WTC11 (cell line): ENCODE measurements at regions of chr1 and their contacts with region 1.

Region 1: GRCh38 chr1:155250633-155251449 is 4.4 kb downstream of the ENTREP3 start:
- DNase-seq: peak; percentile 99
- ATAC-seq: peak; percentile 87
- H3K4me3 Mint-ChIP-seq: peak overlapping the region; percentile 58
- H3K27ac Mint-ChIP-seq: peak overlapping the region; percentile 89
- H3K4me1 Mint-ChIP-seq: peaks cover 24% of the 10 kb centered on the region
- H3K27me3 Mint-ChIP-seq: peaks cover 16% of the 10 kb centered on the region
- CTCF ChIP-seq: peak; percentile 99

Region 2: GRCh38 chr1:155084722-155085503 is 165.9 kb before region 1 on chr1:
- CTCF ChIA-PET with region 1: interaction called, 15 read pairs
- POLR2A ChIA-PET with region 1: no interaction called
- DNase-seq: peak; percentile 97
- ATAC-seq: peak; percentile 67
- H3K4me3 Mint-ChIP-seq: peak overlapping the region; percentile 95
- H3K27ac Mint-ChIP-seq: peak overlapping the region; percentile 74
- H3K4me1 Mint-ChIP-seq: peaks cover 35% of the 10 kb centered on the region
- H3K27me3 Mint-ChIP-seq: peaks cover 45% of the 10 kb centered on the region
- CTCF ChIP-seq: peak; percentile 90

Region 3: GRCh38 chr1:155193275-155193990 is 57.4 kb before region 1 on chr1:
- CTCF ChIA-PET with region 1: interaction called, 53 read pairs
- POLR2A ChIA-PET with region 1: interaction called, 5 read pairs
- DNase-seq: peak; percentile 97
- ATAC-seq: peak; percentile 67
- H3K4me3 Mint-ChIP-seq: peak overlapping the region; percentile 99
- H3K27ac Mint-ChIP-seq: peak overlapping the region; percentile 99
- H3K4me1 Mint-ChIP-seq: peaks cover 34% of the 10 kb centered on the region
- H3K27me3 Mint-ChIP-seq: peaks cover 4% of the 10 kb centered on the region; the same call in 1 of the 2 replicates
- CTCF ChIP-seq: peak; percentile 98

Region 4: GRCh38 chr1:155227261-155228095 is 23.4 kb before region 1 on chr1:
- CTCF ChIA-PET with region 1: interaction called, 48 read pairs
- POLR2A ChIA-PET with region 1: interaction called, 6 read pairs
- DNase-seq: peak; percentile 97
- ATAC-seq: peak; percentile 96
- H3K4me3 Mint-ChIP-seq: peak overlapping the region; percentile 92
- H3K27ac Mint-ChIP-seq: peak overlapping the region; percentile 97
- H3K4me1 Mint-ChIP-seq: peaks cover 22% of the 10 kb centered on the region
- H3K27me3 Mint-ChIP-seq: peaks cover 29% of the 10 kb centered on the region
- CTCF ChIP-seq: no peak

Region 5: GRCh38 chr1:155277070-155277895 is 26.4 kb after region 1 on chr1 and contains the start of gene HCN3:
- CTCF ChIA-PET with region 1: interaction called, 70 read pairs
- POLR2A ChIA-PET with region 1: interaction called, 6 read pairs
- DNase-seq: peak; percentile 100
- ATAC-seq: peak; percentile 68
- H3K4me3 Mint-ChIP-seq: peak within 1 kb of the TSS; percentile 68
- H3K27ac Mint-ChIP-seq: no peak within 1 kb of the TSS
- H3K4me1 Mint-ChIP-seq: peaks cover 32% of the 10 kb centered on the region
- H3K27me3 Mint-ChIP-seq: peaks cover 18% of the 10 kb centered on the region
- CTCF ChIP-seq: peak; percentile 35; the same call in 1 of the 2 replicates
- total RNA-seq, gene HCN3: 5.9 to 7.3 TPM (median 6.3 TPM) in 3 replicates

Region 6: GRCh38 chr1:155308493-155309422 is 57.9 kb after region 1 on chr1 and contains the start of gene FDPS:
- CTCF ChIA-PET with region 1: interaction called, 49 read pairs
- POLR2A ChIA-PET with region 1: no interaction called
- DNase-seq: peak; percentile 97
- ATAC-seq: peak; percentile 97
- H3K4me3 Mint-ChIP-seq: peak within 1 kb of the TSS; percentile 97
- H3K27ac Mint-ChIP-seq: peak within 1 kb of the TSS; percentile 99
- H3K4me1 Mint-ChIP-seq: peaks cover 22% of the 10 kb centered on the region
- H3K27me3 Mint-ChIP-seq: no peaks in the 10 kb centered on the region
- CTCF ChIP-seq: no peak
- total RNA-seq, gene FDPS: 342 to 366 TPM (median 354 TPM) in 3 replicates

Region 7: GRCh38 chr1:155334962-155335361 is 84.1 kb after region 1 on chr1:
- CTCF ChIA-PET with region 1: interaction called, 11 read pairs
- POLR2A ChIA-PET with region 1: interaction called, 4 read pairs
- DNase-seq: no peak
- ATAC-seq: no peak
- H3K4me3 Mint-ChIP-seq: no peak overlapping the region
- H3K27ac Mint-ChIP-seq: peak overlapping the region; percentile 57; the same call in 1 of the 2 replicates
- H3K4me1 Mint-ChIP-seq: no peaks in the 10 kb centered on the region
- H3K27me3 Mint-ChIP-seq: no peaks in the 10 kb centered on the region
- CTCF ChIP-seq: no peak